ENCODE measurements at regions of chr3 and their contacts with region 1.

Region 1: DNA sequence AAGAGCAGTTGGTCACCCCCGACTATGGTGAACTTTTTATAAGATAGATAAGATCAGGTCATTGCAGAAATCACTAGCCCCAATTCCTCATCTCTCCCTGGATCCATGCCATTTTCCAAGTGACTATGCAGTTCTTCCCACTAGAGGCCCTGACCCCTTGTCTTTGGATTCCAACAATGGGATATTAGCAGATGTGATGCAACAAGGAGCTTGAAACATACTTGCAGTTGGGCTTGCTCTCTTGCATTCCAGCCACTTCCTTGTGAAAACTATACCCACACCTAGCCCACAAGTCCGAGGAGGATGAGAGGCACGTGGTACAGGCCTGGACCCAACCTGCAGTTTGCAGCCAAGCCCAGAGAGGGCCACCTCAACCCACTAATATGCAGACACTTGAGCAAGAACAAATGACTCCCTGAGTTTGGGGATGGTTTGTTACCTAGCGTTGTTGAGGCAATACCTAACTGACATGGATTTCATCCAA is 60.6 kb downstream of the SUCLG2 start:
- DNase-seq: no peak
- ATAC-seq: peak; percentile 69
- H3K4me3 ChIP-seq: no peak overlapping the region
- H3K27ac ChIP-seq: no peak overlapping the region
- H3K4me1 ChIP-seq: no peaks in the 10 kb centered on the region
- H3K27me3 ChIP-seq: no peaks in the 10 kb centered on the region
- CTCF ChIP-seq: peak in 2 of 3 experiments; percentile 33 to 39; a peak in 3 of 6 replicates
- POLR2A ChIP-seq: no peak
- RAD21 ChIP-seq: peak; percentile 33

Region 2: GRCh38 chr3:67624078-67624477 is 30.3 kb after region 1 on chr3:
- CTCF ChIA-PET with region 1: no interaction called
- POLR2A ChIA-PET with region 1: no interaction called
- RAD21 ChIA-PET with region 1: no interaction called
- intact Hi-C with region 1: no loop called
- DNase-seq: no peak
- ATAC-seq: no peak
- H3K4me3 ChIP-seq: no peak overlapping the region
- H3K27ac ChIP-seq: no peak overlapping the region
- H3K4me1 ChIP-seq: no peaks in the 10 kb centered on the region
- H3K27me3 ChIP-seq: no peaks in the 10 kb centered on the region
- CTCF ChIP-seq: no peak
- POLR2A ChIP-seq: no peak
- RAD21 ChIP-seq: no peak

Region 3: DNA sequence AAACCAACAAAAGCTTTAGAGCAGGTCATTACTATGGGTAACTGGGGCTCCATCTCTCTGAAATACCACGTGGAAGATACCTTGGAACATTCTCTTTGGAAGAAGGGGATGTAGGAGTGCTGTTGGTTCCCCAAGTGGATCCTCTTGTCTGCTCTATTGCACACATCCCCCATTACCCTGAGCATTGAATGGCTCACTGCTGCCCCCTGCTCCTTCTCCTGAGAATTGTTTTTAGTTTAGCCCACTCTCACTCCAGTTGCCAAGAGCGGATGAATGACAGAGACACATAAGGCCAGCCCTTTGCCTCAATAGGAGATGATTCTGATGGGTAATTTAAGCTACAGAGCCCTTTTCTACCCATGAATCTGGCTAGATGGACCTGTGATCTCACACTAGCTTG is 196.2 kb after region 1 on chr3:
- CTCF ChIA-PET with region 1: no interaction called
- POLR2A ChIA-PET with region 1: no interaction called
- RAD21 ChIA-PET with region 1: no interaction called
- intact Hi-C with region 1: loop called (anchors 5 kb)
- DNase-seq: peak; percentile 23
- ATAC-seq: peak; percentile 94
- H3K4me3 ChIP-seq: no peak overlapping the region
- H3K27ac ChIP-seq: no peak overlapping the region
- H3K4me1 ChIP-seq: no peaks in the 10 kb centered on the region
- H3K27me3 ChIP-seq: no peaks in the 10 kb centered on the region
- CTCF ChIP-seq: peak; percentile 46 to 74 (median 69); a peak in 5 of 6 replicates
- POLR2A ChIP-seq: no peak
- RAD21 ChIP-seq: peak; percentile 65